Vagina (tissue), 2 donors: ENCODE measurements at regions of chr17 and their contacts with region 1.

Region 1: GRCh38 chr17:43641416-43641815 is 20.3 kb downstream of the MEOX1 start:
- DNase-seq: no peak
- H3K4me3 ChIP-seq: no peak overlapping the region
- H3K27ac ChIP-seq: no peak overlapping the region
- H3K4me1 ChIP-seq: peaks cover 10% of the 10 kb centered on the region
- H3K27me3 ChIP-seq: no peaks in the 10 kb centered on the region
- CTCF ChIP-seq: no peak
- POLR2A ChIP-seq: no peak

Region 2: DNA sequence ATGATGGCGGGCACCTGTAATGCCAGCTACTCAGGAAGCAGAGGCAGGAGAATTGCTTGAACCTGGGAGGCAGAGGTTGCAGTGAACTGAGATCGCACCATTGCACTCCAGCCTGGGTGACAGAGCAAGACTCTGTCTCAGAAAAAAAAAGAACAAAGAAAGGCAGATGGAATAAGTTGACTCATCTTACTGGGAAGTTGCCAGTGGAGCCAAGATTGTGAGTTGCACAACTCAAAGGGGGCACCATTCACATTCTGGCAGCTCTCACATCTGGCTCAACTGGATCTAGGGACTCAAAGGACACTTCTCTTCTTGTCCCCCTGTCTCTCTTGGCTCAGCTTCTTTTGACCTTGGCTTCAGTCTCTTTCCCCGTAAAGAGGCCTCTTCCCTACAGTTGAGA is 41.6 kb before region 1 on chr17:
- intact Hi-C with region 1: loop called (anchors 5 kb)
- DNase-seq: no peak
- H3K4me3 ChIP-seq: no peak overlapping the region
- H3K27ac ChIP-seq: no peak overlapping the region
- H3K4me1 ChIP-seq: peaks cover 21% of the 10 kb centered on the region
- H3K27me3 ChIP-seq: no peaks in the 10 kb centered on the region
- CTCF ChIP-seq: no peak
- POLR2A ChIP-seq: no peak

Region 3: DNA sequence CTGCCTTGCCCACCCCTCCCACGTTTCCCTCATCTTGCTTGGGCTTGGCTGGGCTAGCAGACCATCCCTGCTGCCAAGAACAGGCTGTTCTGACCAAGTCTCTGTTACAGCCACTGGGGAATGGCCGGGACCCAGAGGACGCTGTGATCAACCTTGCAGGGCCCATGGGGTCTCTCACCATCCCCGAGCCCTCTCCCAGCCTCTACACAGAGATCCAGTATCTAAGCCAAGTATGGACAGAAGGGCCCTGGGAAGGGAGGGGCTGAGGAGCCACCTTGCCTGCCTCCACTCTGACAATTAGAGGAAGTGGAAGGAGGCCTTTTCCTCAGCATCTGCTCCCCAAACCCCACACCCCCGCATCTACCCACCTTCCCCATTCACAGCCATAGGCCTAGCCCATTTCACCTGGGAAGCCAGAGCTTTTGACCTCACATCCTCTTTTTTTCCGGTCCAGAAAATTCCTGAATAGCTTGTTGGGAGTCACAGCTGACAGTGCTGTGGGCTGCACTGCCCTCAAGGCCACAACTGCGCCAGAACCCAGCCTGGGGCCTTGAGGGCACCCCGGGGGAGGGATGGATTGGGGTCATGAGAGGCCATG is 219.7 kb after region 1 on chr17:
- intact Hi-C with region 1: no loop called
- DNase-seq: no peak
- H3K4me3 ChIP-seq: peak overlapping the region in 1 of 2 donors; percentile 8
- H3K27ac ChIP-seq: peak overlapping the region; percentile 18
- H3K4me1 ChIP-seq: peaks cover 17% of the 10 kb centered on the region
- H3K27me3 ChIP-seq: no peaks in the 10 kb centered on the region
- CTCF ChIP-seq: no peak
- POLR2A ChIP-seq: no peak